ENCODE measurements at regions of chrX and their contacts with region 1.

Region 1: GRCh38 chrX:148229801-148230303 is 248.7 kb downstream of the FMR1NB start:
- DNase-seq: no peak
- ATAC-seq: no peak
- H3K4me3 ChIP-seq: no peak overlapping the region
- H3K4me3 Mint-ChIP-seq: no peak overlapping the region
- H3K27ac ChIP-seq: no peak overlapping the region
- H3K27ac Mint-ChIP-seq: no peak overlapping the region
- H3K4me1 ChIP-seq: no peaks in the 10 kb centered on the region
- H3K4me1 Mint-ChIP-seq: peaks cover 2% of the 10 kb centered on the region
- H3K27me3 ChIP-seq: no peaks in the 10 kb centered on the region
- H3K27me3 Mint-ChIP-seq: no peaks in the 10 kb centered on the region
- CTCF ChIP-seq: no peak

Region 2: DNA sequence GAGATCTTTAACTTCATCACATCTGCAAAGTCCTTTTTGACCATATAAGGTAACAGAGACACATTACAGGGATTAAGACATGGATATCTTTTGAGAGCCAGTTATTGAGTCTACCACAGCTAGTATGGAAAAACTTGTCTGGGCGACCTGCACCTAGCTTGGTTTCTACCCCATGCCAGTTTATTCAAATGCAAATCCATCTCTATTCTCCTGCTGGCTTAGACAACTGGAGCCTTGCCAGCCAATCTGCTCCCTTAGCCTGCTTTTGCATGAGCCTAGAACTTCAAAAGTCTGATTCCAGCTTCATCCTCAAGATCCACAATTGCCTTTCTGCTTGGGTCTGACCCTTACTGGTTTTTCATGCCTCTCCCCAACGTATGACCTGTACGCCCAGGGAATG is 58.6 kb after region 1 on chrX:
- CTCF ChIA-PET with region 1: no interaction called
- POLR2A ChIA-PET with region 1: no interaction called
- intact Hi-C with region 1: loop called in 1 of 2 experiments (anchors 2 kb)
- DNase-seq: no peak
- ATAC-seq: no peak
- H3K4me3 ChIP-seq: no peak overlapping the region
- H3K4me3 Mint-ChIP-seq: no peak overlapping the region
- H3K27ac ChIP-seq: no peak overlapping the region
- H3K27ac Mint-ChIP-seq: no peak overlapping the region
- H3K4me1 ChIP-seq: no peaks in the 10 kb centered on the region
- H3K4me1 Mint-ChIP-seq: peaks cover 9% of the 10 kb centered on the region
- H3K27me3 ChIP-seq: no peaks in the 10 kb centered on the region
- H3K27me3 Mint-ChIP-seq: no peaks in the 10 kb centered on the region
- CTCF ChIP-seq: no peak

Region 3: DNA sequence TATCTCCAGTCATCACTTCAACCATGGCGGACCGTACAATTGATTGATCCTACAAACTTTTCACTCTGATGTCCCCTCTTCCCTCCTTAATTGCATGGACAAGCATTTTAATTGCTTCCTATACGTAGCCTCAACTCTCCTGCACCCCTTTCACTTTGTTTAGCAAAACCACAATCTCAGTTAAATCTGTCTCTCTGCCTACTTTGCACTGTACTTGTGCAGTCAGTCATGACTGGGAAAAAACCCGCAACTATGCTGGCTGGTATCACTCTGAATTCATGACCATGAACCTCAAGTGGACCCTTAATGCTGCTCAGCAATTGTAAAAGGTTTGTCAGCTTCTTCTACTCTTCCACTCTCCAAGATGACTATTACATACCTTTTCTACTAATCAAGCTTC is 218.8 kb after region 1 on chrX:
- CTCF ChIA-PET with region 1: no interaction called
- POLR2A ChIA-PET with region 1: no interaction called
- intact Hi-C with region 1: no loop called
- DNase-seq: no peak
- ATAC-seq: no peak
- H3K4me3 ChIP-seq: no peak overlapping the region
- H3K4me3 Mint-ChIP-seq: no peak overlapping the region
- H3K27ac ChIP-seq: no peak overlapping the region
- H3K27ac Mint-ChIP-seq: no peak overlapping the region
- H3K4me1 ChIP-seq: no peaks in the 10 kb centered on the region
- H3K4me1 Mint-ChIP-seq: no peaks in the 10 kb centered on the region
- H3K27me3 ChIP-seq: no peaks in the 10 kb centered on the region
- H3K27me3 Mint-ChIP-seq: no peaks in the 10 kb centered on the region
- CTCF ChIP-seq: no peak

Measured in CD8-positive, alpha-beta T cell (primary cell).